H1 (cell line): ENCODE measurements at regions of chr12 and their contacts with region 1.

Region 1: DNA sequence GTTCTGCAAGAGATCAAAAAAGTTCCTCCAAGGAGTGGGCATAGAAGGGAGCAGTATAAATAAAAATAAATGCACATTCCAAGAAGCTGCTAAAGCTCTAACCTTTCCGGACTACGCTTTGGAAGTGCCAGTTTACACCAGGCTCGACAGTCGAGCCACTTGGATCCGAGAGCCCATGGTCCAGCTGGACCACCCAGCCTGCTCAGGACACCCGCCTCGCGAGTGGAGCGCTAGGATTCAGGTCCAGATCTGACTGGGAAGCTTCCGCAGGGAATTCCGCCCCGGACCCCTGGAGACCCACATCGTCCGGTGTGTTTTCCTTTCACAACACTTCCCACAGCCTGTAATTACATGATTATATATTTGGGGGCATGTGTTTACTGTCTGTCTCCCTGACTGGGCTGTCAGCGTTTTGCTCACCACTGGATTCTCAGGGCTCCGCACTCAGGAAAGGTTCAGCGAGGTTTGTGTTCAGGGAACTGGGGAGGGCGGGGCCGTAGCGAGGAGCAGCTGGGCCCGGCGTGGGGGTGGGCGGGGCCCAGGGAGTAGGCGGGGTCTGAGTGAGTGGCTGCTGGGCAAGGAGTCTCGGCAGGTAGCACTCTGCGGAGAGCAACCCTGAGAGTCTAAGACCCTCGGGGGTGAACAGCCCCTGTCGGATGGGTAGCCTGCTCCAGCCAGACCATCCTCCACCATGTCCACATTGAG is 52.3 kb upstream of the TMEM263 start:
- DNase-seq: peak; percentile 27 to 93
- H3K4me3 ChIP-seq: peak overlapping the region; percentile 50 to 71 (median 64)
- H3K27ac ChIP-seq: no peak overlapping the region
- H3K4me1 ChIP-seq: peaks cover 0 to 3% (median under 1%) of the 10 kb centered on the region in 4 experiments; a peak in 4 of 7 replicates
- H3K27me3 ChIP-seq: peaks cover 2 to 13% (median 9%) of the 10 kb centered on the region in 4 experiments; a peak in 6 of 7 replicates
- CTCF ChIP-seq: no peak
- EP300 ChIP-seq: no peak
- POLR2A ChIP-seq: no peak
- RAD21 ChIP-seq: no peak

Region 2: GRCh38 chr12:106892075-106892474 is 11.3 kb before region 1 on chr12:
- CTCF ChIA-PET with region 1: interaction called, 15 read pairs
- POLR2A ChIA-PET with region 1: interaction called, 4 read pairs
- DNase-seq: no peak
- H3K4me3 ChIP-seq: no peak overlapping the region
- H3K27ac ChIP-seq: no peak overlapping the region
- H3K4me1 ChIP-seq: no peaks in the 10 kb centered on the region
- H3K27me3 ChIP-seq: no peaks in the 10 kb centered on the region
- CTCF ChIP-seq: no peak
- EP300 ChIP-seq: no peak
- POLR2A ChIP-seq: no peak
- RAD21 ChIP-seq: no peak